Activated CD4-positive, alpha-beta memory T cell treated with anti-CD3 and anti-CD28 coated beads for 36 hours (primary cell): ENCODE measurements at regions of chr12 and their contacts with region 1.

Region 1: DNA sequence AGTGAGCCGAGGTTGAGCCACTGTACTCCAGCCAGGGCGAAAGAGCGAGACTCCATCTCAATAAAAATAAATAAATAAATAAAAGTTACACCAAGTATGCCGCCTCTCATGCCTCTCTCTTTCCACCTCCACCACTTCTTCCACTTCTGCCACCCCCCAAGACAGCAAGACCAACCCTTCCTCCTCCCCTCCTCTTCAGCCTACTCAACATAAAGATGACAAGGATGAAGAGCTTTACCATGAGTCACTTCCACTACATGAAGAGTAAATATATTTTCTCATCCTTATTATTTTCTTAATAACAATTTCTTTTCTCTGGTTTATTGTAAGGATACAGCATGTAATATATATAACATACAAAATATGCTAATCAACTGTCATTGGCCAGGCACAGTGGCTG is 3.6 kb upstream of the TMED2 start:
- DNase-seq: no peak
- H3K4me3 Mint-ChIP-seq: no peak overlapping the region
- H3K27ac Mint-ChIP-seq: no peak overlapping the region
- H3K4me1 Mint-ChIP-seq: peaks cover 20% of the 10 kb centered on the region
- H3K27me3 Mint-ChIP-seq: no peaks in the 10 kb centered on the region

Region 2: GRCh38 chr12:123271001-123271729 is 309.6 kb before region 1 on chr12:
- CTCF ChIA-PET with region 1: interaction called, 4 read pairs
- POLR2A ChIA-PET with region 1: interaction called, 4 read pairs
- intact Hi-C with region 1: loop called (anchors 2 kb)
- DNase-seq: peak; percentile 83
- H3K4me3 Mint-ChIP-seq: no peak overlapping the region
- H3K27ac Mint-ChIP-seq: no peak overlapping the region
- H3K4me1 Mint-ChIP-seq: peaks cover 19% of the 10 kb centered on the region
- H3K27me3 Mint-ChIP-seq: no peaks in the 10 kb centered on the region

Region 3: GRCh38 chr12:123457980-123458783 is 122.6 kb before region 1 on chr12 and contains the start of gene SNRNP35:
- CTCF ChIA-PET with region 1: no interaction called
- POLR2A ChIA-PET with region 1: no interaction called
- intact Hi-C with region 1: loop called (anchors 2 kb)
- DNase-seq: peak; percentile 88
- H3K4me3 Mint-ChIP-seq: peak within 1 kb of the TSS; percentile 97
- H3K27ac Mint-ChIP-seq: peak within 1 kb of the TSS; percentile 99
- H3K4me1 Mint-ChIP-seq: peaks cover 23% of the 10 kb centered on the region
- H3K27me3 Mint-ChIP-seq: no peaks in the 10 kb centered on the region
- total RNA-seq, gene SNRNP35: 28.6 to 30.6 TPM

Region 4: DNA sequence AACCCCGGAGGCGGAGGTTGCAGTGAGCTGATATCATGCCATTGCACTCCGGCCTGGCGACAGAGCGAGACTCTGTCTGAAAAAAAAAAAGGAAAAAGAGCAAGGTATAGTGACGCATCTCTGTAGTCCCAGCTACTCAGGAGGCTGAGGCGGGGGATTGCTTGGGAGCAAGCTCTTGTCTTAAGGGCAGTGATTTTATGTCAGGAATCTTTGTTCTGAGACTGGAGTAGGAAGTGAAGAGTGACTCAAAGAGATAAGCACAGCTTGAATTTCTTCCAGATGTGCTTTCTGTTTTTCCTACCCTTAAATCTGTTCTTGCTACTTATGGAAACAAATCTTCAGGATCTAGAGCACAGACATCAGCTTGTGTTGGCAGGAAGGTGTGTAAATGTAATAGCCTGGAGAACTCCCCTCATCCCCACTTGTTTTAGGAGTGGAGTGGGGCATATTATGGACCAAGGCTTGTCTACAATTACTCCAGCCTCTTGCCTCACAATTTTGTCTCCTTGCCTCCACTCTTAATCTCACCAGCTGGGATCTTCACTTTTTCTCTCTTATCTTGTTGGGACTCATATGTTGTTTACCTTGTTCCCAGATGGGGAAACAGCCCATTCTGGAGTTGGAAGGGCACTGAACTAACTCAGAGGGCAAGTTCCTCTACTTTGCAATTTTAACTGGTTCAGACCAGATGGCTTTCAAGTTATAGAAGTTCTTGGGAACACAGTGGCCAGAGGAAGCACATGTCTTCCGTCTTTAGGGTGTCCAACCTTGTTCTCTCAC is 11.1 kb after region 1 on chr12:
- CTCF ChIA-PET with region 1: interaction called, 15 read pairs
- POLR2A ChIA-PET with region 1: no interaction called
- intact Hi-C with region 1: no loop called
- DNase-seq: no peak
- H3K4me3 Mint-ChIP-seq: no peak overlapping the region
- H3K27ac Mint-ChIP-seq: peak overlapping the region; percentile 9
- H3K4me1 Mint-ChIP-seq: peaks cover 37% of the 10 kb centered on the region
- H3K27me3 Mint-ChIP-seq: no peaks in the 10 kb centered on the region

Region 5: DNA sequence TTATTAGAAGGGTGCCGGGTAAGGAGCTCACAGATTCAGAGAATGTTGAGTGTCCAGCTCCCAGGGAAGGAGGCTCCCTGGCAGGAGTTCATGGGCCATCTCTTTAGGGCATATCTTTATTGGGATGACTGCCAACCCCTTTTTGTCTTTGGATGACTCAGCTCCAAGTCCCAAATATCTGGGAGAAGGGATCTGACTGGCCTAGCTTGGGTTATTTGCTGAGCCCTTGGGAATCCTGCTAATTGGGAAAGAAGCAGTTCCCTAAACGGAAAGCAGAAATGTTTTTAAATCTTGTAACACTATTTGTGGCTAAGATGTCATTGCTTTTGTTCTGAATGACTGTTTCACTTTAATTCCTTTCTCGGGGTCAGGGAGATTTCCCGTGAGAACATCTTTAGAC is 33.8 kb after region 1 on chr12:
- CTCF ChIA-PET with region 1: interaction called, 5 read pairs
- POLR2A ChIA-PET with region 1: no interaction called
- intact Hi-C with region 1: loop called (anchors 1 kb)
- DNase-seq: no peak
- H3K4me3 Mint-ChIP-seq: no peak overlapping the region
- H3K27ac Mint-ChIP-seq: peak overlapping the region; percentile 38
- H3K4me1 Mint-ChIP-seq: peaks cover 2% of the 10 kb centered on the region
- H3K27me3 Mint-ChIP-seq: no peaks in the 10 kb centered on the region